ENCODE measurements at regions of chr11 and their contacts with region 1.

Region 1: DNA sequence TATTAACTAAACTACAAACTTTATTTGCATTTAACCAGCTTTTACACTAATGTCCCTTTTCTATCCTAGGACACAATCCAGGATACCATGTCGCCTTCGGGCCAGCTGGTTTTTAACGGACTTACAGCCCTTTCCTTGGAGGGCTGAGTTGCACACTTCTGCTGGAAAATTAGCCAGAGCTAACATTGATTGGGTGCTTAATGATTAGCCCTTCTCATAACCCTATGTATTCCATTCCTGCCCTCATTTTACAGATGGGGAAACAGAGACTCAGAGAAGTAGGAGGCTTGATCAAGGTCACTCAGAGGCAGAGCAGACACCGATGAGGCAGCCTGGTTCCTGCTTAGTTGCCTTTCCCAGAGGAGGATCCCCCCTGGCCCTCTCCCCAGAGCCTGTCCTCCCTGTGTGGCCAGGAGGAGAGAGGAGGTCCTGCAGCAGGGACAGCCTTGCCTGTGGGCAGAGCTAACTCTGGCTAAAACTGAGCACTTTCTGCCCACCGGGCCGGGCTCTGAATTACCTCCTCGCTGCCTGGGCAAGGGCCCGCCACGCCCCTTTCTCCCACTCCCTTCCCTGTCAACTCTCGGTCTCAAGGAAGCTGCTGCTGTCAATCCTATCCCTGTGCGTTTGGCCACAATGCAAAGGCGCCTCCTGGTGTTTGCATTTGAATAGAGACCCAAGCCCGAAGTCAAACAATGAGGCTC is 59.6 kb upstream of the PAX6 start:
- DNase-seq: peak; percentile 96
- H3K4me3 ChIP-seq: no peak overlapping the region
- H3K27ac ChIP-seq: no peak overlapping the region
- H3K4me1 ChIP-seq: no peaks in the 10 kb centered on the region
- H3K27me3 ChIP-seq: peaks cover 63% of the 10 kb centered on the region
- CTCF ChIP-seq: peak; percentile 100

Region 2: DNA sequence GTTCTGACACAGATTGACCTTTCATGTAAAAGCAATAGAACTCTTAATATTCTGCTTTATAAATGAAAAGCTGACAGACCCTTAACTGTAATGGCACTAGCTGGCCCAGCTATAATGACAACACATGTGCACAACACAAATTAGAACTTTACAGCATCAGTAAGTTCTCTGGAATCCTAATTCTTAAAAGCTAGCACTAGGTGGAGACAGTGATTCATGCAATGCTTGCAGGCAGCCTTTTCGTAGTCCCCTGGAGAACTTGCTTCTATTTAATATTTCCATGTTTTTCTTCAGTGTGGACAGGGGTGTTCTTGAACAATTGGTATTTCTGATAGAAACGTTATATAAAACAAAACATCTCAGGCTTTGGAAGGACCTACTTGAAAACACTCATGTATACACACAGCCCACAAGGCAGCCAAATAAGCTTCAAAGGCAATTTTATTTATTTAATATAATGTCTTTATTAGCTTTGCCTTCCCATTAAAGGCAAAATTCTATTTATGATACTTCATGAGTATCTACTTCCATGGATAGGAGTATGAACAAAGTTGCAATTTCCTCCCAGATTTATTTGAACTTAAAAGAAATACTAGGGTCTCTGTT is 910.3 kb before region 1 on chr11:
- CTCF ChIA-PET with region 1: no interaction called
- POLR2A ChIA-PET with region 1: no interaction called
- intact Hi-C with region 1: loop called (anchors 5 kb)
- DNase-seq: peak; percentile 86
- H3K4me3 ChIP-seq: no peak overlapping the region
- H3K27ac ChIP-seq: no peak overlapping the region
- H3K4me1 ChIP-seq: no peaks in the 10 kb centered on the region
- H3K27me3 ChIP-seq: peaks cover 52% of the 10 kb centered on the region
- CTCF ChIP-seq: peak; percentile 99

Region 3: DNA sequence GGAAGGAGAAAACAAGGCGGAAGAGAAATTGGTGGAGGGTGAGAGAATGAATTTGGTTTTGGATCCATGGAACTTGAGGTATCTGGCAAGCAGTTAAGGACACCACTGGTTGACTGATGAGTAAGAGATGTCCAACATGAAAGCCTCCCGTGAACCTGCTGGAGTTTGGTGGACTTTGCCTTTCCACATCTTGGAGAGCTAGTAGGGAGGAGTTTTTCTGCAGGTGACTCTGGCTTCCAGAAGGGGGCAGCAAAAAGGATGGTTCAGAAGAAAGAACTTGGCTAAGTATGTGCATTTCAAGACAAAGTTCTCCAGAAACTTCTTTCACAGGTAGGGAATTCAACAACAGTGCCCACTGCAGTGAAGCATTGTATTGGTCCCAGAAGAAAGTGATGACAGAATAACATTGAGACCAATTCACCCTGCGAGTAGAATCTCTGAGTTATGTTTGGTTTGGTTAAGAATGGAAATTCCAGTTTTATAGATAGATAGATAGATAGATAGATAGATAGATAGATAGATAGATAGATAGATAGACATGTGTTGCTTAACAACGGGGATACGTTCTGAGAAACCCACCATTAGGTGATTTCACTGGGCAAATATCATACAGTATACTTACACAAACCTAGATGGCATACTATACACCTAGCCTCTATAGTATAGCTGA is 529.7 kb before region 1 on chr11:
- CTCF ChIA-PET with region 1: interaction called, 4 read pairs
- POLR2A ChIA-PET with region 1: no interaction called
- intact Hi-C with region 1: loop called (anchors 2 kb)
- DNase-seq: peak; percentile 80
- H3K4me3 ChIP-seq: no peak overlapping the region
- H3K27ac ChIP-seq: no peak overlapping the region
- H3K4me1 ChIP-seq: no peaks in the 10 kb centered on the region
- H3K27me3 ChIP-seq: peaks cover 71% of the 10 kb centered on the region
- CTCF ChIP-seq: peak; percentile 99

Region 4: DNA sequence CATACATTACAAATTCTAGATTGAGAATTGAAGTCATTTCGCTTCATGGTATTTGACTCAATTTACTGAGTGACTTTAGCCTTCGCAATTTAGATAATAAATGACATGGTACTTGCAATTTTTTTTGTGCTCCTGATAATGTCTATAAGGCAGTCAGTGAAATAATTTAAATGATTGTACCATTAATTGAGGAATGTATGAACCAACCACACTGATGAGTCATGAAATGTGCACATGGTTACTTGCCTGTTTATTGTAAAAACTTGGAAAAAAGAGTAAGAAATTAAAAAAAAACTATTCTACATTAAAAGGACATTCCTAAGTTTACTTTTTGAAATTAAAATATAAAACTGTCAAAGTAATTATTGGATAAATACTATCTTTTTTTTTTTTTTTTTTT is 457.8 kb before region 1 on chr11:
- CTCF ChIA-PET with region 1: interaction called, 10 read pairs
- POLR2A ChIA-PET with region 1: no interaction called
- intact Hi-C with region 1: no loop called
- DNase-seq: peak; percentile 39
- H3K4me3 ChIP-seq: no peak overlapping the region
- H3K27ac ChIP-seq: no peak overlapping the region
- H3K4me1 ChIP-seq: peaks cover 5% of the 10 kb centered on the region
- H3K27me3 ChIP-seq: no peaks in the 10 kb centered on the region
- CTCF ChIP-seq: no peak

Region 5: GRCh38 chr11:31641477-31642062 is 229.2 kb before region 1 on chr11:
- CTCF ChIA-PET with region 1: interaction called, 17 read pairs
- POLR2A ChIA-PET with region 1: no interaction called
- intact Hi-C with region 1: loop called (anchors 1 kb)
- DNase-seq: peak; percentile 74
- H3K4me3 ChIP-seq: no peak overlapping the region
- H3K27ac ChIP-seq: no peak overlapping the region
- H3K4me1 ChIP-seq: peaks cover 11% of the 10 kb centered on the region
- H3K27me3 ChIP-seq: no peaks in the 10 kb centered on the region
- CTCF ChIP-seq: peak; percentile 99